Gastrocnemius medialis (tissue), 4 donors: ENCODE measurements at regions of chr2 and their contacts with region 1.

Region 1: DNA sequence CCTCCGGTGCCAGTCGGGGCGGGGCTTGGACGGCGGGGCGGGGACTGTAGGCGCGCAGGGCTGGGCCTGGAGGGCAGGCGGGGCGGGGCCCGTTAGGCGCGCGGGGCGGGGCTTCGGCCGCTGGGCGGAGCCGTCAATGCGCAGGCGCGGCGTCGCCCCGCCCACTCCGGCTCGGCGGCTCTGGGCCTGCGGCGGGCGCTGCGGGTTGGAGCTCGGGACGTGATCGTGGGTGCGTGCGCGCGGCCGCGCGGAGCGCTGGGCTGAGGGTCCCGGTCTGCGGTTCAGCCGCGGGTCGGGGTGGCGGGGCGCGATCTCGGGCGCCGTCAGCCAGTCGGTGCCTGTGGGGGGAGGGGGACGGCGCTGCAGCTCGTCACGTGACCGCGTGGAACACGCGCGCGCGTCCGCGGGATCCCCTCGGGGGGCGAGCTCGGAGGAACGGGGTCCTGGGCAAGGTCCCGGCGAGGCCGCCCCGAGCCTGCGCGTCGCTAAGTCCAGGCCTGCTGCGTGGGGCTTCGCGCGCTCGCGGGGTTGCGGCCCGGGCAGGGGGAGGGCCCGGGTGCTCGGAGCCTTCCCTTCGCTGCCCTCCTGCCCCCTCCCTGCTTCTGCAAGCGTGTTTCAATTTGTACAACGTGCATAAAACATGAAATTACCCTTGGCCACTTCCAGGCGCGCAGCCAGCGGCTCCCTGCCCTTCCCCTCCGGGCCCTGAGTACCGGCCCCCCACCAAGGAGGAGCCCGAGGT is at the start of gene D2HGDH:
- DNase-seq: peak; percentile 84 to 90
- ATAC-seq: peak; percentile 90 to 91
- H3K4me3 ChIP-seq: peak within 1 kb of the TSS; percentile 73 to 96 (median 78)
- H3K27ac ChIP-seq: peak within 1 kb of the TSS; percentile 77 to 93 (median 82)
- H3K4me1 ChIP-seq: peaks cover 12 to 14% of the 10 kb centered on the region in 2 donors
- H3K27me3 ChIP-seq: no peaks in the 10 kb centered on the region
- CTCF ChIP-seq: peak in 2 of 5 experiments; percentile 21 to 42
- POLR2A ChIP-seq: peak; percentile 64 to 78
- total RNA-seq, gene D2HGDH: 15.9 to 39.6 (median 20.3) TPM

Region 2: GRCh38 chr2:240851078-240851991 is 883.3 kb before region 1 on chr2:
- in situ Hi-C with region 1: no loop called
- intact Hi-C with region 1: loop called (anchors 5 kb)
- DNase-seq: peak; percentile 56 to 80
- ATAC-seq: peak; percentile 93 to 99
- H3K4me3 ChIP-seq: no peak overlapping the region
- H3K27ac ChIP-seq: no peak overlapping the region
- H3K4me1 ChIP-seq: no peaks in the 10 kb centered on the region
- H3K27me3 ChIP-seq: no peaks in the 10 kb centered on the region
- CTCF ChIP-seq: peak; percentile 77 to 96 (median 93)
- POLR2A ChIP-seq: no peak

Region 3: DNA sequence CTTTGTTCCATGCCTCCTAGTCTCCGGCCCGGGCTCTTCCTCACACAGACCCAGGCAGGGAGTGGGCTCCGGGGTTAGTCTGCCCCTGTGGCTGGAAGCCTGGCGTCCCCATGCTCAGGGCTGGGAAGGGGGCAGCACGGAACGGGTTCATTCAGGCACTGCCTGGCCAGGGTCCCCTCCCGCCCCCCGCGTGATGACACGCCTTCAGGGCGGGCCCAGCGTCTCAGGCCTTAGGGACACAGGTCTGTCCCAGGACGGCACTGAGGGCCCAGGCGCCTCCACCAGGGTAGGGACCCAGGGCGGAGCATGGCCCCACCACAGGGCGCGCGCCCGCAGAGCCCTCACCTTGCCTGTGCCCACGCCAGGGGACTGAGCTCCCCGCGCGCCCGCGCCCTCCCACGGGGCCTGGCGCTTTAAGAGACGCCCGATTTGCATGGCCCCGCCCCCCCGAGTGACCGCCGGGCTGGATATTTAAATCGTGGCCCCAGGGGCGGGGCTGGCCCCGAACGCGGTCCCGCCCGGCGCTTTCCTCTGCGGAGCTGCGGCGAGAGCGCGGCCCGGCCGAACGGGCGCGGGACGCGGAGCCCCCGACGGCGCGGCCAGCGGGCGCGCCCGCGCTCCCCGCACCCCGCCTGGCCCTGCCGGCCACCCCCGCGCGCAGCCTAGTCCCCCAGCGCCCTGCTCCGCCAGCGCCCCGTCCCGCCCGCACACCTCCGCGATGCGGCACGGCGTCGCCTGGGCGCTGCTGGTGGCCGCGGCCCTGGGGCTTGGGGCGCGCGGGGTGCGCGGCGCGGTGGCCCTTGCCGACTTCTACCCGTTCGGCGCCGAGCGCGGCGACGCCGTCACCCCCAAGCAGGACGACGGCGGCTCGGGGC is 736.3 kb before region 1 on chr2 and contains the start of gene SNED1:
- in situ Hi-C with region 1: no loop called
- intact Hi-C with region 1: loop called (anchors 10 kb)
- DNase-seq: peak; percentile 87 to 89
- ATAC-seq: peak; percentile 61 to 79
- H3K4me3 ChIP-seq: peak within 1 kb of the TSS; percentile 63 to 98 (median 73)
- H3K27ac ChIP-seq: peak within 1 kb of the TSS; percentile 95 to 99 (median 96)
- H3K4me1 ChIP-seq: peaks cover 41 to 51% of the 10 kb centered on the region in 2 donors
- H3K27me3 ChIP-seq: no peaks in the 10 kb centered on the region
- CTCF ChIP-seq: no peak
- POLR2A ChIP-seq: peak; percentile 92 to 98
- total RNA-seq, gene SNED1: 16.4 to 56.2 (median 43.5) TPM

Region 4: GRCh38 chr2:241609859-241610793 is 124.5 kb before region 1 on chr2:
- in situ Hi-C with region 1: no loop called
- intact Hi-C with region 1: loop called (anchors 5 kb)
- DNase-seq: peak; percentile 55 to 78
- ATAC-seq: peak; percentile 86
- H3K4me3 ChIP-seq: peak overlapping the region; percentile 67 to 80 (median 70)
- H3K27ac ChIP-seq: peak overlapping the region; percentile 72 to 85 (median 78)
- H3K4me1 ChIP-seq: peaks cover 7 to 14% of the 10 kb centered on the region in 2 donors
- H3K27me3 ChIP-seq: no peaks in the 10 kb centered on the region
- CTCF ChIP-seq: peak; percentile 48 to 87 (median 56)
- POLR2A ChIP-seq: peak; percentile 23 to 47

Region 5: DNA sequence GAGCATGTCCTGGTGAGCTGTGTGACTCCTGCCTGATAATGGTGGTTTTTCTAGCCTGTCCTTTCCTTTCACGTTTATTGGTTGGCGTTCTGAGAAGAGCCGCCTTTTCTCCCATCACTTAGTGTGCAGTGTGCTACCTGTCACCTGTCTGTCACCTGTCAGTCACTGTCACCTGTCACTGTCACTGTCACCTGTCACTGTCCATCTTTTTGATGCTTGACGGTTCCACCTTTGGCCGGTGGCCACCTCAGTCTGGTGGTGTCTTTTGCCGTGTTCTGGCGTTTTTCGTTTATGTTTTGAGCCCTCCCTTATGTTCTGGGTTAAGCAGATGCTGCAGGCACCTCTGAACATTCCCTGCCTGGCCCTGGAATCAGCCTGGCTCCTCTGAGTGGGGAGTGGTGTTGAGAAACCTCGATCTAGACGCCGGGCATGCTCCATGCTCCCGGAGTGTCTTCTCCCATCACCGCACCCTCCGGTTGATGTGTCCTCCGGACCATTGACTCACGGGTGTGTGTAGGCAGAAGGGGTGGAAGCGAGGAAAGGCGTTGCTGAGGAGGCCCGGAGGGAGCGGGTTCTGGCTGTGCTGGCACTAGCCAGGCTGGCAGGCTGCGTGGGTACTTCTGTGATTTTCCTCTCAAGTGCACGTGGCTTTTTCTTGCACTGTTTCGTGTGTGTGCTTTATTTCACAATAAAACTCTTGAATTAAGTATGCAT is 68.8 kb before region 1 on chr2:
- in situ Hi-C with region 1: no loop called
- intact Hi-C with region 1: loop called (anchors 1 kb)
- DNase-seq: no peak
- ATAC-seq: peak in 1 of 2 donors; percentile 44
- H3K4me3 ChIP-seq: no peak overlapping the region
- H3K27ac ChIP-seq: no peak overlapping the region
- H3K4me1 ChIP-seq: no peaks in the 10 kb centered on the region
- H3K27me3 ChIP-seq: no peaks in the 10 kb centered on the region
- CTCF ChIP-seq: no peak
- POLR2A ChIP-seq: no peak

Region 6: DNA sequence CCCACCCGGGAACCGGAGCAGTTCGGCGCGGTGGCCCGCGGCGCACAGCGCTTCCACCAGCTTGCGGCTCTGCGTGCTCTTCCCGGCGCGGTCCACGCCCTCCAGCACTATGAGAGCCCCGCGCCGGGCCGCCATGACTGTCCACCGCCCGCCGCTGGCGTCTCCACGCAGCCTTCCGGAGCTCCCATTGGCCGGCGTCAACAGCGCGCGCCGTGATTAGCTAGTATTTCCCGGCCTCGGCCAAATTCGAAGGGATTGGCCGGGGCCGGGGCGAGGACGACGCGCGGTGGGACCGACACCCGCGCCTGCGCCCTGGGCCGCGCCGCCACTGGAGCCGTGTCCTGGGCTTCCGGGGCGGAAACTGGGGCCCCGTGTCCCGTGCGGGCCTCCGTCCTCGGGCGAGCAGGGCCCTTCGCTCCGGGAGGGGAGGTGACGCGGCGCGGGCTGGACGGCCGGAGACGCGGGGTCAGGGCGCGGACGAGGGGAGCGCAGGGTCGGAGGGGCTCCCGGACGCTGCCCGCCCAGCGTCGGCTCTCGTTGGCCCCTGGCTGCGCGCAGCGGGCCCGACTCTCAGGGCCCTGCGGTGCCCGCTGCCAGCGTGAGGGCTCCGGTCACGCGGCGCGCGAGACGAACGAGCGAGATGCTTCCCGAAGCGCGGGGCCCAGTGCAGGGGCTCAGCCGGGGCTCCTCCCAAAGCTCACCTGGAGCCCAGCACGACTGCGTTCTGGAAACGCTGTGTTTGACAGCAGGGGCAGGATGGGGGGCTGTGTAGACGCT is 47.8 kb before region 1 on chr2 and contains the start of gene DTYMK:
- in situ Hi-C with region 1: no loop called
- intact Hi-C with region 1: loop called (anchors 1 kb)
- DNase-seq: peak; percentile 92 to 95
- ATAC-seq: peak; percentile 95 to 96
- H3K4me3 ChIP-seq: peak within 1 kb of the TSS; percentile 81 to 98 (median 84)
- H3K27ac ChIP-seq: peak within 1 kb of the TSS; percentile 90 to 99 (median 93)
- H3K4me1 ChIP-seq: peaks cover 27 to 30% of the 10 kb centered on the region in 2 donors
- H3K27me3 ChIP-seq: no peaks in the 10 kb centered on the region
- CTCF ChIP-seq: no peak
- POLR2A ChIP-seq: peak; percentile 93 to 96
- total RNA-seq, gene DTYMK: 3.9 to 8.2 (median 5.9) TPM

Region 7: DNA sequence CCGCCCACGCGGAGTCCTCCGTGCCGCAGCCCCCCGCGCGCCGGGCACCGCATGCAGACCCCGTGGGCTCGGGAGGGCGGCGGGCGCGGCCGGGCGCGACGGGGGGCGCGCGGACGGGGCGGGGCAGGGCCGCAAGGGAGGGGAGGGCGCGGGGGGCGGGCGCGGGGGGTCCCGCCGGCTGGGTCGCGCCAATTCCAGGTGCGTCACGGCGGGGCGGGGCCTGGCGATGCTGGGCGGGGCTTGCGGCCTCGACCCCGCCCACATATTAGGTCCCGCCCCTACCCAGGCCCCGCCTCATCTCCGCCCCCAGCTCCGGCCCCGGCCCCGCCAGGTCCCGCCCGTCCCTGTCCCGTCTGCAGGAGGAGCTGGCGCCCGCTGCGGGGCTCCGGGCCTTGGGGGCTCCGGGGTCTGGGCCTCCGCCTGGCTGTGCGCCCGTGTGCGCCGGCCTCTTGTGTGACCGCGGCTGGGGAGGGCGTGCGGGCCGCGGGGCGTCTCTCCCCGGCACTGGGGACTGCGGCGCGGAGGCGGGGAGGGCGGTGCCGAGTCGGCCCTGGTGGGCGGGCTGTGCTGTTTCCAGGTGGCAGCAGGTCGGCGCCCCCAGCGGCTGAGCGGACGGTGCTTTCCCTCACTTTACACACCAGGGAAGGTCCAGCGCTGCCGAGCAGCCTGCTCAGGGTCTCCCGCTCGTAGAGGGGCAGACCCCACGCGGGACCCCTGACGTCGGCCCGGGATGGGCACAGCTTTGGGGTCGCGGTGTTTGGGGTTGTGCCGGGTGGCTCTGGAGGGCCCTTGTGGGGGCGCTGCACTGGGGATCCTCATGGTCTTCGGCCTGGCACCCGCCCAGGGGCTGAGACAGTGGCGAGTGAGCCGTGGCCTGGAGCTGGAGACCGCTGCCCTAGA is 32.3 kb before region 1 on chr2:
- in situ Hi-C with region 1: no loop called
- intact Hi-C with region 1: loop called (anchors 1 kb)
- DNase-seq: peak; percentile 78 to 81
- ATAC-seq: peak; percentile 83 to 85
- H3K4me3 ChIP-seq: peak overlapping the region; percentile 57 to 97 (median 82)
- H3K27ac ChIP-seq: peak overlapping the region; percentile 89 to 97 (median 94)
- H3K4me1 ChIP-seq: peaks cover 6 to 16% of the 10 kb centered on the region in 2 donors
- H3K27me3 ChIP-seq: no peaks in the 10 kb centered on the region
- CTCF ChIP-seq: peak in 4 of 5 experiments; percentile 28 to 36 (median 34)
- POLR2A ChIP-seq: no peak

Region 8: GRCh38 chr2:241844066-241844728 is 109.6 kb after region 1 on chr2:
- in situ Hi-C with region 1: no loop called
- intact Hi-C with region 1: no loop called
- DNase-seq: peak; percentile 25 to 59
- ATAC-seq: peak; percentile 62 to 81
- H3K4me3 ChIP-seq: peak overlapping the region; percentile 42 to 56 (median 46)
- H3K27ac ChIP-seq: peak overlapping the region in 3 of 4 donors; percentile 35 to 44 (median 35)
- H3K4me1 ChIP-seq: no peaks in the 10 kb centered on the region
- H3K27me3 ChIP-seq: peaks cover 0 to 4% (median 3%) of the 10 kb centered on the region in 3 donors
- CTCF ChIP-seq: peak in 1 of 5 experiments; percentile 19
- POLR2A ChIP-seq: no peak